ENCODE measurements at regions of chr22 and their contacts with region 1.

Region 1: GRCh38 chr22:46250035-46250782 is at the start of gene CDPF1:
- DNase-seq: peak; percentile 93
- ATAC-seq: peak; percentile 96
- H3K4me3 Mint-ChIP-seq: peak within 1 kb of the TSS; percentile 87
- H3K27ac Mint-ChIP-seq: peak within 1 kb of the TSS; percentile 79
- H3K4me1 Mint-ChIP-seq: peaks cover 18% of the 10 kb centered on the region
- H3K27me3 Mint-ChIP-seq: no peaks in the 10 kb centered on the region
- CTCF ChIP-seq: no peak
- total RNA-seq, gene CDPF1: 10.3 and 14.3 TPM in 2 replicates

Region 2: GRCh38 chr22:46150034-46150654 is 100.1 kb before region 1 on chr22 and contains the start of gene PPARA:
- CTCF ChIA-PET with region 1: no interaction called
- POLR2A ChIA-PET with region 1: interaction called, 9 read pairs
- intact Hi-C with region 1: loop called (anchors 5 kb)
- DNase-seq: peak; percentile 92
- ATAC-seq: peak; percentile 80
- H3K4me3 Mint-ChIP-seq: peak within 1 kb of the TSS; percentile 87
- H3K27ac Mint-ChIP-seq: peak within 1 kb of the TSS; percentile 73
- H3K4me1 Mint-ChIP-seq: peaks cover 23% of the 10 kb centered on the region
- H3K27me3 Mint-ChIP-seq: no peaks in the 10 kb centered on the region
- CTCF ChIP-seq: no peak
- total RNA-seq, gene PPARA: 17.7 and 23.0 TPM in 2 replicates

Region 3: DNA sequence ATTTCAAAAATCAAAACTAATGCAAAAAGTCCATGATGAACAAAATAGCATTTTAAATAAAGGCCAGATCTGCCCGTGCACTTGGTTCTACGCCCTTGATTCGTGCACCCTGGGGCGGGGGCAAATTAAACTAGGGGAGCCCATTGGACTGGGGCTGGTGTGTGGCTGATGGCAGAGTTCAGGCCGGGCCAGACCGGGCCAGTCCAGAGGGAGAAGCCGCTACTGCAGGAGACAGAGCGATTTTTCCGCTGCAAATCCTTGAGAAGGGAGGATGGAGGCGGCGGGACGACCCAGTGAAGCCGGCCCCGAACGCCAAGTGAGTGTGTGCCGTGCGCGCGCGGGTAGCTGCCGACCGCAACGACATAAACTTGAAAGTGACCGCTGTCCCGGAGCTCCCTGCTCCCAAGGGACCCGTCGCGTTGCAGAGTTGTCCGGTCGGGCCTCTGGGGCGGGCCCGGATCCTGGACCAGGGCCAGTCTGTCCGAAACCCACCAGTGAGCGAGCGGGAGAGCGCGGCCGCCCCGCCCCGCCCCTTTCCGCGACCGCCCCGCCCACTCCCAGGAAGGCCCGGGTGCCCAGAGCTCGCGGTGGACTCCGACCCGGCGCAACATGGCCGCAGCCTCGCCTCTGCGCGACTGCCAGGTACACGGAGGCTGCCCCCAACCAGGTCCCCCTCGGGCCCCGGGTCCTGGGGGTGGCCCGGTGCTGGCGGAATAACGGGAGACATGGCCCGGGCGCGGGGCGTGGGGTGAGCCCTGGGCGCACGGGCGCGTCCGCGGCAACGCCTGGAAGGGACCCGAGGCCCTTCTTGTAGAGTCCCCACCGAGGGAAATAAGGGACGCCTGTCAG is 17.4 kb after region 1 on chr22 and contains the start of gene TTC38:
- CTCF ChIA-PET with region 1: interaction called, 4 read pairs
- POLR2A ChIA-PET with region 1: interaction called, 12 read pairs
- intact Hi-C with region 1: loop called (anchors 1 kb)
- DNase-seq: peak; percentile 57
- ATAC-seq: peak; percentile 91
- H3K4me3 Mint-ChIP-seq: peak within 1 kb of the TSS; percentile 91
- H3K27ac Mint-ChIP-seq: peak within 1 kb of the TSS; percentile 66
- H3K4me1 Mint-ChIP-seq: peaks cover 15% of the 10 kb centered on the region
- H3K27me3 Mint-ChIP-seq: peaks cover 19% of the 10 kb centered on the region
- CTCF ChIP-seq: no peak
- total RNA-seq, gene TTC38: 9.8 and 11.8 TPM in 2 replicates

Region 4: DNA sequence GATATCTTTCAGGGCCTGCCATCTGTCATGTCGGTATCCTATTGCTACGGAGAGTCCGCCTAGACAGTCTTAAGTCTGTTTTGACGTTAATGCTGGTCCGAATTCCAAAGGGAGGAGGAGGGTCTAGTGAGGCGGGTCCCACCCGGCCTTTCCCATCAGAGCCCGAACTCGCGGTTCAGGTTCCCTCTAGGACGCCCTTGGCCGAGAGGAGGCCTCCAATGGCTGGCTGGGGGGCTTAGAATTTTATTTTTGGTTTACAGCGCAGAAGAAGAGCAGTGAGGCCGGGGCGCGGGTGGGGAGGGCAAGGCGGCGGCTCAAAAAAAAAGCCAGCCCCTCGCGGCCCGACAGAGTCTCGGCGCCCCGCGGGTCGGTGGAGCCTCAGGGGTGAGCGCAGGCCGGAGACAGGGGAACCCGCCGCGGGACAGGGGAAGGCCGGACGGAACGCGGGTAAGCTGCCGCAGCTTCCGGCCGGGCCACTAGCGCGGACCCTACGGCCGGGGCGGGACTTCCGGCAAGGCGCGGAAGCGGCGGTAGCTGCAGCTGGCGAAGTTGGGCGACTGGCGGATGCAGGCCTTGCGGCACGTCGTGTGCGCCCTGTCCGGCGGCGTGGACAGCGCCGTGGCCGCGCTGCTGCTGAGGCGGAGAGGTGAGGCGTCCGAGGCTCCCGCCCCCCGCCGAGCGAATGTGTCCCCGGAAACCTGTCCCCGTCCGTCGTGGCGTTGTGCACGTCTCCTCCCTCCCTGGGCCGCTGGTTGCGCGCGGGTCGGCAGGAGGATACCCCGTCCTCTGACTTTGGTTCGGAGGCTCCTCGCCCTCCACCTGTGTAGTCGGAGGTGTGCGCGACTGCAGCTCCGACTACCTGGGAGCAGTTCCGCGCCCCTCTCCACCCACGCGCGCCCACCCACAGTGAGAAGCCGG is 85.3 kb after region 1 on chr22 and contains the start of gene TRMU:
- CTCF ChIA-PET with region 1: no interaction called
- POLR2A ChIA-PET with region 1: interaction called, 4 read pairs
- intact Hi-C with region 1: loop called (anchors 5 kb)
- DNase-seq: peak; percentile 82
- ATAC-seq: peak; percentile 92
- H3K4me3 Mint-ChIP-seq: peak within 1 kb of the TSS; percentile 93
- H3K27ac Mint-ChIP-seq: peak within 1 kb of the TSS; percentile 92
- H3K4me1 Mint-ChIP-seq: peaks cover 26% of the 10 kb centered on the region
- H3K27me3 Mint-ChIP-seq: no peaks in the 10 kb centered on the region
- CTCF ChIP-seq: no peak
- total RNA-seq, gene TRMU: 52.2 and 60.0 TPM in 2 replicates

Region 5: DNA sequence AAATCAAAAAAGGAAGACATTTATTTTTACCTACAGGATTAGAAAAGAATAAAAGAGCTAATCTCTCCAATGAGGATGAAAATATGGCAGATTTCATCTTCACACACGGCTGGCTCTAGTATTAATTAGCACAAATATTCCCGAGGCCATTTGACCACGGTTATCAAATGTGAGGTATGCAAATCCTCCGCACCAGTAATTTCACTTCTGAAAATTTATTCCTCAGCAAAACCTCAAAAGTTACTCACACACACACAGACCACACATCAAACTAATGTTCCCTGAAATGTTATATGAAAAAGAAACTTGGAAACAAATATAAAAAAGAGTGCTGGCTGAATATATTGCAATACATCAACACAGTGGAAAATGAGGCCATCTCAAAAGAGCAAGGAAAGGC is 254.4 kb after region 1 on chr22:
- CTCF ChIA-PET with region 1: no interaction called
- POLR2A ChIA-PET with region 1: interaction called, 10 read pairs
- intact Hi-C with region 1: no loop called
- DNase-seq: no peak
- ATAC-seq: no peak
- H3K4me3 Mint-ChIP-seq: no peak overlapping the region
- H3K27ac Mint-ChIP-seq: no peak overlapping the region
- H3K4me1 Mint-ChIP-seq: peaks cover 14% of the 10 kb centered on the region
- H3K27me3 Mint-ChIP-seq: peaks cover 33% of the 10 kb centered on the region
- CTCF ChIP-seq: no peak

Measured in activated B cell treated with CpG ODN at 0.5 μM for 24 hours (primary cell).